PC-3 (cell line): ENCODE measurements at regions of chr11 and their contacts with region 1.

Region 1: GRCh38 chr11:10004526-10005113 is 289.4 kb downstream of the SBF2 start:
- DNase-seq: no peak
- ATAC-seq: no peak
- H3K4me3 ChIP-seq: no peak overlapping the region
- H3K27ac ChIP-seq: no peak overlapping the region
- H3K4me1 ChIP-seq: peaks cover 5% of the 10 kb centered on the region; the same call in 1 of the 2 replicates
- H3K27me3 ChIP-seq: no peaks in the 10 kb centered on the region
- CTCF ChIP-seq: no peak

Region 2: DNA sequence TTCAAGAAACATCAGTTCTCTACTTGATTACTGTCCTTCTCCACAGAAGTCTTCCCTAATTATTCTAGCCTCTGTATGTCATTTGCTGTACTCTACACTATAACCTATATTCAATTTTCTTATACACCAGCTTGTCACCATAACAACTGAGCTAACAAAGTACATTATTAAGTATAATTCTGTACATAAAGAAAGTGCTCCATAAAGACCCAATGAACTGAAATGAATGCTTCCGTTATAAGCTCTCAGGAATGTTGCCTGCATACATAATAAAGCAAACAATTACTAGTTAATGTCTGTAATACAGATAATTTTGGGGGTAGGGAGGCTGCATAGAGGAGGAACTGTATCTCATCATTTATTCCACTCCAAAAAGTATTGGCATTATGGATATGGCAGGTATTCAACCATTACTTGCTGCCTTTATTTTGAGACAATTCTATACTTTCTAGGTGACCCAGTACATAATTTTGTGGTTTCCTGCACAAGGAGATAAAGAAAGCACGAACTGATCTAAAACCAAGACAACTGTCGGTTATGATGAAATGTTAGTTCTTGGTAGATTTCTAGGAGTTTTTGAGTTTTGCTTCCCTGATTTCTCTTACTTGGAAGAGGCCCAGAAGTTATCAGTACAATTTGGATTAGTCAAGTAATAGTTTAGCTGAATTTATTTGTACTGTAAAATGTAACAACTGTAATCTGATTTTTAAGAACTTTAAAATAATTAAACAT is 86.9 kb after region 1 on chr11:
- CTCF ChIA-PET with region 1: no interaction called
- POLR2A ChIA-PET with region 1: no interaction called
- intact Hi-C with region 1: loop called (anchors 10 kb)
- DNase-seq: peak; percentile 55
- ATAC-seq: peak; percentile 70
- H3K4me3 ChIP-seq: no peak overlapping the region
- H3K27ac ChIP-seq: 0 out of 2 replicates have a peak overlapping the region, but pooled peaks have one; percentile 1
- H3K4me1 ChIP-seq: peaks cover 28% of the 10 kb centered on the region
- H3K27me3 ChIP-seq: no peaks in the 10 kb centered on the region
- CTCF ChIP-seq: no peak